PC-9 (cell line): ENCODE measurements at regions of chr7 and their contacts with region 1.

Region 1: GRCh38 chr7:79272066-79272669 is 181.3 kb downstream of the MAGI2 start:
- DNase-seq: no peak
- H3K4me3 ChIP-seq: no peak overlapping the region
- H3K27ac ChIP-seq: no peak overlapping the region
- H3K4me1 ChIP-seq: no peaks in the 10 kb centered on the region
- H3K27me3 ChIP-seq: no peaks in the 10 kb centered on the region
- CTCF ChIP-seq: peak; percentile 78

Region 2: DNA sequence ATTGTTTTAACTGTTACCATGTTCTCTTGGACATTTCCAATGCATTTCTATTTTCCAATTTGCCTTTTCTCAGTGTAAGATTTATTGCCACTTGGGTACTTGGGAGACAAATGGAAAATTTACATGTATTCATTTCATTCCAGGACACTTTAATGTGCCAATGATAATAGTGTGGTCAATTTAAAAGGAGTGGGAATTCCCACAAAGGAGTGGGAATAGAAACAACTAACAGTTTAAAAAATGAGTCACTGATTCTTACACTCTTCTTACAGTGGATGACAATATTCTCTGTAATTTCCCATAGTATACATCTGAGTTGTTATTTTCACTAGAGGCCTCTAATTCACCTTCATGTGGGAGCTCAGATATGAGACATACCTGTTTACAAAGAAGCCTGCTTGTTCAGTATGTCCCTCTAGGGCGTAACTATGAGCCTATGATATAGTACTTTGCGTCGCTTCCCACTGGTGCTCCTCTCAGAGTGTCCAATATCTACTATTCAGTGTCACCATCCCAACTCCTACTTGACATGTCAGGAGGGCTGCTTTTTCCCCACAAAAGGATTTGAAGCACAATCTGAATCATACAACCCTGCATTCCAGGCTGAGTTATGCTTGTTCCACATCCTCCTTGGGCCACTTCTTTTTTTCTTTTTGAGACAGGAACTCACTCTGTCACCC is 1172.3 kb before region 1 on chr7:
- CTCF ChIA-PET with region 1: no interaction called
- POLR2A ChIA-PET with region 1: no interaction called
- intact Hi-C with region 1: no loop called
- DNase-seq: no peak
- H3K4me3 ChIP-seq: no peak overlapping the region
- H3K27ac ChIP-seq: no peak overlapping the region
- H3K4me1 ChIP-seq: no peaks in the 10 kb centered on the region
- H3K27me3 ChIP-seq: no peaks in the 10 kb centered on the region
- CTCF ChIP-seq: no peak

Region 3: DNA sequence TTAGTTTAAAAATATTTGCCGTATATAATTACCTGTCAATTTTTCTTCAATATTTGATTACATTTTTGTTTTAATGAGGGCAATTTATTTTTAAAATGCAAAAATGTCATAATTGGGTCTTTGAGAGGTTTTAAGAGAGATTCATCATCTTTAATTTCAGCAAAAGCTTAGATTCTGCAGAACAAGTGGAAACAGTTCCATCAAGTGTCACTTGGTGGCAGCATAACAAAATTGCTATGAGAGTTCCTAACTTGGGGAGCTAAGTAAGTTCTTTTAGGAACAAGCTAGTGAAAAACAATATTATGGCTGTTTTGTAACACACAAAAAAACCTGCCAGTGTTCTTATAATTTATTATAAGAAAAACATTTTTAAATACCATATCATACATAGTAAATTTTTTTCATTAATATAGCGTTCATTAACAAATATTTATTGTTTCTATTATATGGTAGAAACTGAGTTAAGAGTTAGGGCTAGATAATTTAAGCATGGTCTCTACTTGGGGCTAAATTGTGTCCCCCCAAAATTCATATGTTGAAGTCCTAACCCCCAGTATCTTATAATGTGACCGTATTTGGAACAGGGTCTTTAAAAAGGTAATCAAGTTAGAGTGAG is 26.1 kb after region 1 on chr7:
- CTCF ChIA-PET with region 1: interaction called, 10 read pairs
- POLR2A ChIA-PET with region 1: no interaction called
- intact Hi-C with region 1: no loop called
- DNase-seq: peak; percentile 25 to 51
- H3K4me3 ChIP-seq: no peak overlapping the region
- H3K27ac ChIP-seq: no peak overlapping the region
- H3K4me1 ChIP-seq: no peaks in the 10 kb centered on the region
- H3K27me3 ChIP-seq: no peaks in the 10 kb centered on the region
- CTCF ChIP-seq: peak; percentile 83

Region 4: GRCh38 chr7:79647711-79648110 is 375.5 kb after region 1 on chr7:
- CTCF ChIA-PET with region 1: no interaction called
- POLR2A ChIA-PET with region 1: interaction called, 12 read pairs
- intact Hi-C with region 1: no loop called
- DNase-seq: no peak
- H3K4me3 ChIP-seq: no peak overlapping the region
- H3K27ac ChIP-seq: no peak overlapping the region
- H3K4me1 ChIP-seq: no peaks in the 10 kb centered on the region
- H3K27me3 ChIP-seq: no peaks in the 10 kb centered on the region
- CTCF ChIP-seq: no peak

Region 5: DNA sequence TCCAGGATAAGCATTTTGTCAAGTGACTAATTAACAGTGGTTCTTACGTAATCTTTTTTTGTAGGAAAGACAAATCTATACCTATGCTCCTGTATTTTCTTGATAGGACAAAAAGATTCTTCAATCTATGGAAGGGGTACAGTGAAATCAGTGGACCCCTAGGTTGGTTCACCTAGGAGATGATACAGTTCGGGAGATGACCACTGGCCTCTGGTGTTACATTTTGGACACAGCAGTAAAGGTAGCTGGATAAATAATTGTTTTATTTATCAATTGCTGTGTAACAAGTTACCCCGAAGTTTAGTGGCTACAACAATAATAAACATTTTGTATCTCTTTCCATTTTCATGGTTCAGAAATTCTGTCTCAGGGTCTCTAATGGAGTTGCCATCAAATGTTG is 469.5 kb after region 1 on chr7:
- CTCF ChIA-PET with region 1: interaction called, 3 read pairs
- POLR2A ChIA-PET with region 1: no interaction called
- intact Hi-C with region 1: loop called (anchors 1 kb)
- DNase-seq: no peak
- H3K4me3 ChIP-seq: no peak overlapping the region
- H3K27ac ChIP-seq: no peak overlapping the region
- H3K4me1 ChIP-seq: no peaks in the 10 kb centered on the region
- H3K27me3 ChIP-seq: no peaks in the 10 kb centered on the region
- CTCF ChIP-seq: peak; percentile 66

Region 6: DNA sequence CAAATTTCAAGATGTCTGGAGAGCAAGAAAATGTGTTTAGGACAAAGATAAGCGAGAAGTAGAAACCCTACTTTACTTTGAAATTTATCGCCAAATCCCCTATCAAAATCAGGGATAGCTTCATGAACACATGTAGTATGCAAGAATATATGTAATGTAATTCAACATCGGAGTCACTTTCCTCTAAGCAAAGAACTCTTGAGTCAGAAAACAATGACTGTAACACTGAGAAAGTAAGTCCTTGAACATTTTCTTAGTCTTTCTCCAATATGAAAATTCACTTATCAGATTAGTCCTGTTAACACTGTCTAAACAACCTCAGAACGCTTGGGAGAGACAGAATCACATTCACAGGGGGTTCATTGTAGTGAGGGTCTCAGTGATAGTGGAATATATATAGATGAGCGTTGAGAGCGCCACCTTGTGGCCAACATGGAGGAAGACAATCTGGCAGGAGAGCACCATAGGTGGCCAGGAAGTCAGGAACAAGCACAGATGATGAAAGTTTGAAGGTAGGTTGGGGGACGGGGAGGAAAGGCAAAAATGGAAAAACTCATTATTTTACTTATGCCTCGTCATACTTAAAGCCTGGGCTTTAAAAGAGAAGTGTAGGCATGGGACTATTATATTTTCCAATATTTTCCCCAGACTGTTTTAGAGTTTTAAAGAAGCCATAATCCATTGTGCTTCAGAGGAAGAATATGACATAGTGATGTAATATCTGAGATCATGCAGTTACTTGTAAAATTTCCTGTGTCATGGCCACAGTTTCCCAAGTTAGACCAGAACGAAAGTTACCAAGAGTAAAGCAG is 747.0 kb after region 1 on chr7:
- CTCF ChIA-PET with region 1: no interaction called
- POLR2A ChIA-PET with region 1: no interaction called
- intact Hi-C with region 1: loop called (anchors 2 kb)
- DNase-seq: peak in 1 of 2 experiments; percentile 29
- H3K4me3 ChIP-seq: peak overlapping the region; percentile 11; the same call in 1 of the 2 replicates
- H3K27ac ChIP-seq: no peak overlapping the region
- H3K4me1 ChIP-seq: peaks cover 7% of the 10 kb centered on the region
- H3K27me3 ChIP-seq: no peaks in the 10 kb centered on the region
- CTCF ChIP-seq: peak; percentile 99